MCF 10A (cell line): ENCODE measurements at regions of chr12 and their contacts with region 1.

Region 1: DNA sequence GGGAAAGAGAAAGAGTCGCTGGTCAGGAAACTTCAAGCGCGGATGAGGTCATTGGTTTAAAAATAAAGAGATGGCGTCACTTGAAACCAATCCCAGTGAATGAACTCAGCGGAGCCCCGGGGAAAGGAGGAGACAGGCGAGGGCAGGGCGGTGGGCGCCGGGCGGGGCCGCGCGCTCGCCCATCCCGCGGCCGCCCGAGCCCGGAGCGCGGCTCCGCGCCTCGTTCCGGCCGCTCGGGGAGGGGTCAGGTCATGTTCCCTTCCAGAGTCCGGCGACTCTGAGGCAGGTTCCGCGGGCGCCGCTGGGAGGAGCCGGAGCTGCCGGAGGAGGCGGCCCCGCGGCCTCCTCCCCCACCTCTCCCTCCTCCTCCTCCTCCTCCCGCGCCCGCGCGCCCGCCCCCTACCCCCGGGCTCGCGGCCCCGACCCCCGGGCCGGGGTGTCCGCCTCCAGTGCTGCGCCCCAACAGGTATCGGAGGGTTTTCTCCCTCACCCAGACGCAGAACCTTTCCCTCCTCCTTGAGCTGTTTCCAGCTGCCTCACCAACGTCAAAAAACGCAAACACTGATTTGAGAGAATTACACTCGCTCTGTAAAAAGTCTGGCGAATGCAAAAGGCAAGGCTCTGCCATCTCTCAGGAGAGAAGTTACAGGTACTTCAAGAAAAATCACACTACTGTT is at the start of gene DUSP16:
- DNase-seq: peak; percentile 94
- H3K4me3 Mint-ChIP-seq: peak within 1 kb of the TSS; percentile 69
- H3K27ac Mint-ChIP-seq: peak within 1 kb of the TSS; percentile 95
- H3K4me1 Mint-ChIP-seq: peaks cover 28% of the 10 kb centered on the region
- H3K27me3 Mint-ChIP-seq: no peaks in the 10 kb centered on the region
- CTCF ChIP-seq: no peak
- total RNA-seq, gene DUSP16: 18.9 and 20.7 TPM in 2 replicates

Region 2: DNA sequence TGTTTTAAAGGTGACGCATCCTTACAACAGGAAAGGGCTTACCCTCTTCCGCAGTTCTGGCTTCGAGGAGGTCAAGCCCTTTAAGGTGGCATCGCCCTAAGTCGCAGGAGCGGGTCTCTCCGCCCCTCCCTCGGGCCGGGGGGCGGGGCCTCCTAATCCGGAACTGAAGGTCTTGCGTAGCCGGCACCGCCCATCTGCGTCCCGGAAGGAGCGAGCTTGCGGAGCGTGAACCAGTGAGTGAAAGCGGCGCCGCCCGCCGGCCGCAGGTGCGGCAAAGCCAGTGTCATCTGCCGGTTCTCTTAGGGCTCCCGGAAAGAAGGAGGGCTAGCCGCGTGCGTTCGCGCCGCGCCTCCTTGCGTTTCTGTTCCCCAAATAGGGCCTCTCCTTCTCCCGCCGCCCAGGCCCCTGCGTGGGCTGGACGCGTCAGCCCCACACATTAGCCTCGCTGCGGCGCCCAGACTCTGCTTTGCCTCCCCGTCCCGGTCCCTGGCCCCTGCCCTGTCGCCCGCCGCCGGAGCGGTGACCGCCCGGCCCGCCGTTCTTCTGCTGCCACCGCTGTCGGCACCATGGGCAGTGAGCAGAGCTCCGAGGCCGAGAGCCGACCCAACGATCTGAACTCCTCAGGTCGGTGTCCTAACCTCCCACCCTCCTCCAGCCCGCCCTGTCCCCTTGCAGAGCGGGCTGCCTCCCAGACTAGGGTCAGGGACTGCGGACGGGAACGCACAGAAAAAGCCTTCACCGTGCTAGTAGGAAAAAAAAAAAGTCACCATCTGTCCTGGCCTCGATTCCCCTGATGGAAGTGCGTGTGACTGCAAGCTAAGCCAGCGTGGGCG is 205.6 kb before region 1 on chr12 and contains the start of gene BORCS5:
- CTCF ChIA-PET with region 1: interaction called, 6 read pairs
- POLR2A ChIA-PET with region 1: interaction called, 19 read pairs
- intact Hi-C with region 1: no loop called
- DNase-seq: peak; percentile 98
- H3K4me3 Mint-ChIP-seq: peak within 1 kb of the TSS; percentile 91
- H3K27ac Mint-ChIP-seq: peak within 1 kb of the TSS; percentile 94
- H3K4me1 Mint-ChIP-seq: no peaks in the 10 kb centered on the region
- H3K27me3 Mint-ChIP-seq: no peaks in the 10 kb centered on the region
- CTCF ChIP-seq: no peak
- total RNA-seq, gene BORCS5: 11.0 and 15.3 TPM in 2 replicates

Region 3: DNA sequence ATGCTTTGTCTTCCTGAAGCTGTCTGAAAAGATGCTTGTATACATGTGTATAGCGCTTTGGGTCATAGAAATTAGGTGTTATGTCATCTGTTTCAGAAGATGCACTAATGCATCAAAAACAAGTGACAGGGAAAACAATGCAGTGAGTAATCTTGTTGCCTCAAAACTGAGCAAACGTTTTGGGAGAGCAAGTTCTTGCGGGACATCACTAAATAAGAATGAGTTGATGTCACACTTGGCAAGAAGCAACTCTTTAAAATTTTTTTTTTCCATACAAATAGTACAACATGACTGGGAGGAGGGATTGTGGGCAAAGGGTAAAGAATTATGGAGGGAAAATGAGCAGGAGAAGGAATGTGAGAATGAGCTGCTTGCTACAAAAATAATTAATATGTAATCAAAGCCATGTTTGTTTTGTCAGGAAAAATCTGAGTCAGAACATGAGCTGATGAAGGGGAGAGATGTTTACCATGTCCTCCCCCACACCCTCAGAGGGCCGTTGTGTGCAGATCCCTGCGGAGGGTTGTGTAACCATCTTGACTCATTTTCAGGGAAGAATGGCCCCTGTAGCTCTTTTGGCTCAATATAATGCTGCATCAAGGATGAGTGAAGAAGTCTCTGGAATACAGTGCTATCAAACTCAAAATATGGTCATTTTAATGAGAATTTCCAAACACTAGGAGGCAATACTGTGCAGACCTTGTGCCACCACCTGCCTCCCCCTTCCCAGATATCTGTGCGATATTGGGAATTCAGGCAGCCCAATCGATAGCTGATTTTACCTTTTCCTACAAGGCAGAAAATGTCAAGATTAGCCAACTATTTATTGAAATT is 164.5 kb before region 1 on chr12:
- CTCF ChIA-PET with region 1: interaction called, 5 read pairs
- POLR2A ChIA-PET with region 1: interaction called, 8 read pairs
- intact Hi-C with region 1: loop called (anchors 1 kb)
- DNase-seq: peak; percentile 97
- H3K4me3 Mint-ChIP-seq: peak overlapping the region; percentile 34
- H3K27ac Mint-ChIP-seq: peak overlapping the region; percentile 21
- H3K4me1 Mint-ChIP-seq: peaks cover 18% of the 10 kb centered on the region
- H3K27me3 Mint-ChIP-seq: no peaks in the 10 kb centered on the region
- CTCF ChIP-seq: no peak

Region 4: DNA sequence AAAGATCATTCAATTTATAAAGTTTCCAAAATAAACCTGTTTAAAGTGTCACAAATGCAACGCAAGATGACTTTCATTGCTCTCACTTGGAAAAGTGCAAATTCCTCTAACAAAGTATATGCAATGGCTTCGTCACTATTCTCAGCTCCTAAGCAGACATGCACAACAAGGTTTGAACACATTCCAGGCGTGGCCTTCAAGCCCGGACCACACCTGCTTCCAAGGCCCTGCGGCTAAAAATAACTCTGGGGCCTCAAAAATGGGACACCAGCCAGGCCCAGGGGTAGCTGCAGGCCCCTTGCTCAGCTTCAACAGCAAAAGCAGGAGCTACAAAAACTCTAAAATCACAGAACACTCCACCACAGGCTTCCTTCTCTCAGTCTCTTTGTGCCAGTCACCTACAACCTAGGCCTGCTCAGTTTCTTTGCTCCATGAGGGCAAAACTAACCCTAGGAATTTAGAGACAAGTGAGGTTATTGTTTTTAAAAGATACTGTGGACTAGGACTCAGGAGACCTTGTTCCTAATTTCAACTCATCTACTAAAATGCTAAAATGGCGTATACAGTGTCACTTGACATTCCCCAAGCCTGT is 29.4 kb before region 1 on chr12:
- CTCF ChIA-PET with region 1: interaction called, 6 read pairs
- POLR2A ChIA-PET with region 1: interaction called, 10 read pairs
- intact Hi-C with region 1: no loop called
- DNase-seq: peak; percentile 59
- H3K4me3 Mint-ChIP-seq: no peak overlapping the region
- H3K27ac Mint-ChIP-seq: peak overlapping the region; percentile 23
- H3K4me1 Mint-ChIP-seq: peaks cover 6% of the 10 kb centered on the region
- H3K27me3 Mint-ChIP-seq: no peaks in the 10 kb centered on the region
- CTCF ChIP-seq: no peak

Region 5: DNA sequence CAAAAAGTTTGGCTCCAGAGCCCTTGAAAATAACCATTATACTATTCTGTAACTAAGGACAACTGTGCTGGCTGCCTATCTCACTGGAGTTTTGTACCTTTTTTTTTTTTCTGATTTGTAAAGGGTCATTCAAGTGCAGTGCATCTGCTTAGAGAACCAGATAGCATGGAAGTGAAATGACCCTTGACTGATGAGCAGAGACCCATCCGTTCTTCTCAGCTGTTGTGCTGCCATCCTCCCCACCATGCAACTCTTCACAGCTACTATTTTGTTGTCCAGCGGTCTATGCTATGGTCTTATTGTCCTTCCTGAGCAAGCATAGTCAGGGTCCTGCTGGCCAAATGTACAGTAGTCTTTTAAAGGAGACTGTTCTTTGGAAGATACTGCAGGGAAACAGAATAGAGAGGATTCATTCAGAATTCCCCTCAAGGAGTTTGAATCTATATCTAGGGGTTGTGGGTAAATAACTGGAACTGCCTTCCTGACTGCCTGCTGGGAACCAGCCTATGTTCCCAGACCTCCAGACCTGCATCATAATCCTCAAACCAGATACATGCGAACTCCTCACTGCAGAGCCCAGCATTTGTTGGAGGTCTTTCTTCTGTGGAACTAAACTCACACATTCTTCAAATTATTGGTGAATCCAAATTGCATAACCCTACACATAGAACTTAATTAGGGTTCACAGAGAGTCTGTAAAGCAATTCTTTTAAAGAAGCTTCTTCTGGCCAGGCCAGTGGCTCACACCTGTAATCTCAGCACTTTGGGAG is 92.2 kb after region 1 on chr12:
- CTCF ChIA-PET with region 1: interaction called, 10 read pairs
- POLR2A ChIA-PET with region 1: interaction called, 4 read pairs
- intact Hi-C with region 1: loop called (anchors 2 kb)
- DNase-seq: no peak
- H3K4me3 Mint-ChIP-seq: no peak overlapping the region
- H3K27ac Mint-ChIP-seq: no peak overlapping the region
- H3K4me1 Mint-ChIP-seq: peaks cover 12% of the 10 kb centered on the region
- H3K27me3 Mint-ChIP-seq: no peaks in the 10 kb centered on the region
- CTCF ChIP-seq: no peak

Region 6: DNA sequence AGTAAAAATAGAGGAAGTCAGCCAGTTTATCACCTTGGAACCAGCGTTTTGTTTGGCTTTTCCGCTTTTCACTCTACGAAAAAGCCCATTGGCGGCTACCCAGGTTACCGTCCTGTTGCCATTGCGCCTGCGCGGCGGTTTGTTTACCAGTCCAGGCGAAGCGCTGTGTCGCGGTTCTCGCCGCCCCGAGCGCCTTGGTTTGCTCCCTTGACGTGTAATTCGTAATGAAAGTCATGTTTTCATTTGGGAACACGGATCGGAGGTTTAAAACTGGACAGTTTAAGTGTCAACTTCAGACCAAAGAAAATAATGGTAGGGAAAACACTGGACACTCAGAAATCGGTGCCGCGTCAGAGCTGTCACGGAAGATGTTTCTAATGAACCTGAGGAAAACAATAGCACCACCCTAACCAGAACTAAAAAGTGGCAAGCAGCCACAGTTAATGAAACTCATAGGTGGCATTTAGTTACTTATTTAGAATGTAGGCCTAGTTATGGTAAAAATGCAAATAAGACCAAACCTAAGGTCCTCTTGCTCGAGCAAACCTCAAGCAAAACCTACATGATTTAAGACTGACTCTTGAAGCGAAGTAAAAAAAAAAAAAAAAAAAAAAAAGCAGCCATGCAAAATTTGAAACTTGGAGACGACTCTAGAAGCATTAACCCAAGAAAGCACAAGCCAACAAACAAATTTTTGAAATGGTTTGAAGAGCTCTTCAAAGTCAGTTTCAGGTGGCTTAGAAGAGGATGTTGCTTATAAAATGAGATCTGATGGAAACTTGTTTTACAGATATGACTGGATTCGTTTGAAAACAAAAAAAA is 134.1 kb after region 1 on chr12:
- CTCF ChIA-PET with region 1: interaction called, 3 read pairs
- POLR2A ChIA-PET with region 1: interaction called, 24 read pairs
- intact Hi-C with region 1: no loop called
- DNase-seq: peak; percentile 86
- H3K4me3 Mint-ChIP-seq: peak overlapping the region; percentile 88
- H3K27ac Mint-ChIP-seq: peak overlapping the region; percentile 99
- H3K4me1 Mint-ChIP-seq: peaks cover 16% of the 10 kb centered on the region
- H3K27me3 Mint-ChIP-seq: no peaks in the 10 kb centered on the region
- CTCF ChIP-seq: no peak

Region 7: DNA sequence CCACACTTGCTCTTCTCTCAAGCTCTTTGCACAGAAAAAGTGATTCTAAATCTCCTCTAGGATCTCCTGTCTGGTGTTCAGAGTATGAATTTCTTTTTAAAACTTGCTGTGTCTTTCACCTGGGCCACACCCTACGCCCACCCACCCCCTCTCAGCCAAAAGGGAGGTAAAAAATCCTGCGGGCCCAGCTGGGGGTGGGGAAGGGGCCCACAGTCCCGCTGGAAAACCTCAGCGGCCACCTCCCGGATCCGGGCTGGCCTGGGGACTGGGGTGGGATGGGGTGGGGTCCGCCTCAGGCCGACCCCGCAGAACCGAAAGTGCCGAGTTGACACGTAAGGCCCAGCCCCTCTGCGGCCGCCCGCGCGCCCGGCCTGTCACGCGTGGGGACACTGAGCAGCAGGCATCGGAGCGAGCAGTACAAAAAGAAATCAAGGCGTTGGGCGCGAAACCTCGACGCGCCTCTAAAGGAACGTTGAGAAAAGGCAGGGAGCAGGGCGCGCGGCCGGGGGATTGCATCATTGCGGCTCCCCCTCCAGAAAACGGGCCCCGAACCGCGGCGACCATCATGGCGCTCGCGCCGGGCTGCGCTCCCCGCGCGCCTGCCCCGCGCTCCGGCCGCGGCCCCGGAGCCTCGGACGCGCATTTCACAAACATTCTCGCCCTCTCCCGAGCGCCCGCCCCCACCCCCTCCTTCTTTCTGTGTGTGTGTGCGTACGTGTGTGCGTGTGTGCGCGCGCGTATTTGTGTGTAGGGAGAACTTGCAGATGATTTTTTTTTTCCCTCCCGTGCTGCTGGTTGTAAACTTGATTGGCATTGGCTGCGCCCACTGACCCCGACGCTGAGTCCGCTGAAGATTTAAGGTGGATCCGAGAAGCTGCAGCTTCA is 162.2 kb after region 1 on chr12:
- CTCF ChIA-PET with region 1: interaction called, 3 read pairs
- POLR2A ChIA-PET with region 1: interaction called, 41 read pairs
- intact Hi-C with region 1: no loop called
- DNase-seq: peak; percentile 97
- H3K4me3 Mint-ChIP-seq: peak overlapping the region; percentile 98
- H3K27ac Mint-ChIP-seq: peak overlapping the region; percentile 99
- H3K4me1 Mint-ChIP-seq: peaks cover 18% of the 10 kb centered on the region
- H3K27me3 Mint-ChIP-seq: no peaks in the 10 kb centered on the region
- CTCF ChIP-seq: no peak